ENCODE measurements at regions of chr1 and their contacts with region 1.

Region 1: DNA sequence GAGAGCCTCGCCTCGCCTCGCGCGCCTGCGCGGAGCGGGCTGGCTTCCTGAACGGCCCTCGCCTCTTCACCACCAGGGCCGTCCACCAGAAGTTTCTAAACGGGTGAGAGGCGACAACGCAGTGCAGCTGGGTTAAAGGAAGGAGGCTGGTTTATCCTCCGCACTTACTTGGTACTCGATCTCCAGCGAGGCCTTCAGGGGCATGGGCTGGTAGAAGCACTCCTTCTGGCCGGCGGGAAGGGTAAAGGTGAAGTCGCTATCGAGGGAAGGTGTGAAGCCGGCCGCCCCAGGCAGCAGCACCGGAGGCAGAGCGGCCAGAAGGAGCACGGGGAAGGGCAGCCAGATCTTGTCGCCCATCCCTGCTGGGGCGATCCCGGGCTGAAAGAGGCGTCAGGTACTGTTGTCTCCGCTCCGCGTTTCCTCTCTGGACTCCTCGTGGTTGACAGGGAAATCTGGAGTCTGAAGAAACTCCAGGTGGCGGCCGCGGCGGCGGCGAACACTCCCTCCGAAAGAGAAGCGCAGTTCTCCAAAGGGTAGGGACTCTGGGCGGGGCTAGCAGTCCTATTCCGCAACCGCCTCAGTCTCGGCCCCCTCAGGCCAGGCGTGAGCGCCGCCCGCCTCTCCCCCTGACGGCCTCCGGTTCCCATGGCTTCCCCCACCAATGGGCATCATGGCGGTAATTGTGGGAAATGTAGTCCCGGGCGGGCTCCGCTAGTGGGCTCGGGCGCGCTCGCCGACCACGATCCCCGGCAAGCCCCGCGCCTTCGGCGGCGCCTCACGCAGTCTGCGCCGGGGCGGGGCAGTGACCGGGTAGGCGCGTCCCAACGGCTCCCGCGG is at the start of gene TMED5:
- DNase-seq: peak; percentile 93 to 97
- ATAC-seq: peak; percentile 78 to 93 (median 86)
- H3K4me3 ChIP-seq: peak within 1 kb of the TSS; percentile 93
- H3K4me3 Mint-ChIP-seq: peak within 1 kb of the TSS; percentile 89
- H3K27ac ChIP-seq: peak within 1 kb of the TSS; percentile 97
- H3K27ac Mint-ChIP-seq: peak within 1 kb of the TSS; percentile 95
- H3K4me1 ChIP-seq: peaks cover 26% of the 10 kb centered on the region
- H3K4me1 Mint-ChIP-seq: peaks cover 35 to 54% of the 10 kb centered on the region in 2 donors
- H3K27me3 ChIP-seq: no peaks in the 10 kb centered on the region
- H3K27me3 Mint-ChIP-seq: no peaks in the 10 kb centered on the region
- CTCF ChIP-seq: peak; percentile 11
- total RNA-seq, gene TMED5: 64.6 to 73.5 (median 67.0) TPM

Region 2: DNA sequence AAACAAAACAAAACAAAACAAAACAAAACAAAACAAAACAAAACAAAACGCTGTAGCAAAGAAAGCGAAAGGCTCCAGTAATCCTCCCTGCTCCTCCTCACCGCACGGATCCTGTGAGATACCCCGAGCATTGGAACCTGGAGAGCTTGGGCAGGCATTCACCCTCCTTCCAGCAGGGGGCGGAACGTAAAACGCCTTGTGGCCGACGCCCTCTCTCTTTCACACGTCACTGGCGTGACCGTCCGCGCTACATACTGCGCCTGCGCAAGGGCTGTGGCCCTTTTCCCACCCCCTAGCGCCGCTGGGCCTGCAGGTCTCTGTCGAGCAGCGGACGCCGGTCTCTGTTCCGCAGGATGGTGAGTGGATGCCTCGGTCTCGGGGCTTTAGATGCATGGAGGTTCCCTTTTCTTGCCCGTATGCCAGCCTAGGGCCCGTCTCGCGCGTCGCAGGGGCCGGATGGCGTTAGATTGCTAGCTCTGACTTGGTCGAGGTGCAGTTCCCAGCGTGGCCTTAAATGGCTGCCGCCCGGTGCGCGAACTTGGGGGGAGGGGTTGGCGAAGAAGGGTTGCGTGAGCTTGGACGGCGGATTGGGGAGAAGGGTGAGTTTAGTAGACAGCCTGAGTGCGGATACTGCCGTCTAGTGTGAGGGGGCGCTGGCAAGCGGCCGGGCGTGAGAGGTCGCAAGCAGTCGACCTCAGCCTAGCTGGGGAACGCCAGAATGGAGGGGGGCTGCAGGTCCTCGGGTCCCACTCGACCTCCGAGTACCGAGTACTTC is 348.2 kb before region 1 on chr1 and contains the start of gene RPL5:
- intact Hi-C with region 1: loop called (anchors 2 kb)
- DNase-seq: peak; percentile 98 to 99
- ATAC-seq: peak; percentile 88 to 97 (median 89)
- H3K4me3 ChIP-seq: peak within 1 kb of the TSS; percentile 87
- H3K4me3 Mint-ChIP-seq: peak within 1 kb of the TSS; percentile 99
- H3K27ac ChIP-seq: peak within 1 kb of the TSS; percentile 87
- H3K27ac Mint-ChIP-seq: peak within 1 kb of the TSS; percentile 98 to 100
- H3K4me1 ChIP-seq: peaks cover 24% of the 10 kb centered on the region
- H3K4me1 Mint-ChIP-seq: peaks cover 45 to 48% of the 10 kb centered on the region in 2 donors
- H3K27me3 ChIP-seq: no peaks in the 10 kb centered on the region
- H3K27me3 Mint-ChIP-seq: no peaks in the 10 kb centered on the region
- CTCF ChIP-seq: peak; percentile 91
- total RNA-seq, gene RPL5: 573 to 679 (median 647) TPM

Region 3: GRCh38 chr1:93078986-93079654 is 101.0 kb before region 1 on chr1 and contains the start of gene MTF2:
- intact Hi-C with region 1: loop called (anchors 1 kb)
- DNase-seq: peak; percentile 87 to 96
- ATAC-seq: peak; percentile 89 to 95 (median 92)
- H3K4me3 ChIP-seq: peak within 1 kb of the TSS; percentile 82
- H3K4me3 Mint-ChIP-seq: peak within 1 kb of the TSS; percentile 94
- H3K27ac ChIP-seq: peak within 1 kb of the TSS; percentile 83
- H3K27ac Mint-ChIP-seq: peak within 1 kb of the TSS; percentile 92 to 99
- H3K4me1 ChIP-seq: peaks cover 16% of the 10 kb centered on the region
- H3K4me1 Mint-ChIP-seq: peaks cover 40 to 52% of the 10 kb centered on the region in 2 donors
- H3K27me3 ChIP-seq: no peaks in the 10 kb centered on the region
- H3K27me3 Mint-ChIP-seq: no peaks in the 10 kb centered on the region
- CTCF ChIP-seq: no peak
- total RNA-seq, gene MTF2: 46.1 to 65.7 (median 47.8) TPM

Region 4: GRCh38 chr1:93235271-93235670 is 55.2 kb after region 1 on chr1:
- intact Hi-C with region 1: no loop called
- DNase-seq: no peak
- ATAC-seq: no peak
- H3K4me3 ChIP-seq: no peak overlapping the region
- H3K4me3 Mint-ChIP-seq: no peak overlapping the region
- H3K27ac ChIP-seq: no peak overlapping the region
- H3K27ac Mint-ChIP-seq: no peak overlapping the region
- H3K4me1 ChIP-seq: no peaks in the 10 kb centered on the region
- H3K4me1 Mint-ChIP-seq: no peaks in the 10 kb centered on the region
- H3K27me3 ChIP-seq: no peaks in the 10 kb centered on the region
- H3K27me3 Mint-ChIP-seq: no peaks in the 10 kb centered on the region
- CTCF ChIP-seq: no peak

Region 5: GRCh38 chr1:93345633-93346420 is 165.7 kb after region 1 on chr1 and contains the start of gene DR1:
- intact Hi-C with region 1: loop called (anchors 1 kb)
- DNase-seq: peak; percentile 86 to 94
- ATAC-seq: peak; percentile 74 to 89 (median 78)
- H3K4me3 ChIP-seq: peak within 1 kb of the TSS; percentile 83
- H3K4me3 Mint-ChIP-seq: peak within 1 kb of the TSS; percentile 100
- H3K27ac ChIP-seq: peak within 1 kb of the TSS; percentile 89
- H3K27ac Mint-ChIP-seq: peak within 1 kb of the TSS; percentile 99 to 100
- H3K4me1 ChIP-seq: no peaks in the 10 kb centered on the region
- H3K4me1 Mint-ChIP-seq: peaks cover 46 to 48% of the 10 kb centered on the region in 2 donors
- H3K27me3 ChIP-seq: no peaks in the 10 kb centered on the region
- H3K27me3 Mint-ChIP-seq: no peaks in the 10 kb centered on the region
- CTCF ChIP-seq: no peak
- total RNA-seq, gene DR1: 84.3 to 91.4 (median 85.3) TPM